ENCODE measurements at regions of chr3 and their contacts with region 1.

Region 1: DNA sequence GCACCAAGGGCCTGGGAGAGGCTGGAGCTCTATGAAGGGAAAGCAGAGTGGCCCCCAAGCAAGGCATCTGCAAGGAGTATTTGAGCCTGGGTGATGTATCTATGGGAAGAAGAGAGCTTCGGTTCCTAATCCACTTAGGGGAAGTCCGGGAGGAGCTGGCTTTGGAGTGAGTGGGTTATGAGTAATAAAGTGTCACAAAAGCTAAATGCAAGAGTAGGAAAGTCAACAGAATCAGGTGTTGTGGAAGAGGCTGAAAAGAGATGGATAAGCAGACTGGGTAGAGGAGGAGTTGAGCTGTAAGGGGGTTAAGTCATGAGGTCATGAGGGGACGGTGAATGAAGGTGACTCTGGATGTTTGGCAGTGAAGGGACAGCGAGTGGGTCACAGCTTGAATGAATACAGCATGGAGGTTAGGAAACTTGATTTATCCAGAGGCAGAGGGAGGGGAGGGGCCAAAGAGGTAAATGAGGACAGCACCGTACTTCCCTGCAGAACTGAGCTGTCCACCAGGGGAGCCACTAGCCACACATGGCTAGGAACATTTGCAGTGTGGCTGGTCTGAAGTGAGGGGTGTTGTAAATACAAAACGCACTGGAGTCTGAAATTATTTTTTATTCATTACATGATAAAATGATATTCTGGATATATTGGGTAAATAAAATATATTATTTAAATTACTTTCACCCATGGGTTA is 83.3 kb downstream of the ADCY5 start:
- DNase-seq: peak in 1 of 2 experiments; percentile 16
- H3K4me3 ChIP-seq: no peak overlapping the region
- H3K27ac ChIP-seq: no peak overlapping the region
- H3K4me1 ChIP-seq: no peaks in the 10 kb centered on the region
- H3K27me3 ChIP-seq: no peaks in the 10 kb centered on the region
- CTCF ChIP-seq: peak; percentile 46

Region 2: DNA sequence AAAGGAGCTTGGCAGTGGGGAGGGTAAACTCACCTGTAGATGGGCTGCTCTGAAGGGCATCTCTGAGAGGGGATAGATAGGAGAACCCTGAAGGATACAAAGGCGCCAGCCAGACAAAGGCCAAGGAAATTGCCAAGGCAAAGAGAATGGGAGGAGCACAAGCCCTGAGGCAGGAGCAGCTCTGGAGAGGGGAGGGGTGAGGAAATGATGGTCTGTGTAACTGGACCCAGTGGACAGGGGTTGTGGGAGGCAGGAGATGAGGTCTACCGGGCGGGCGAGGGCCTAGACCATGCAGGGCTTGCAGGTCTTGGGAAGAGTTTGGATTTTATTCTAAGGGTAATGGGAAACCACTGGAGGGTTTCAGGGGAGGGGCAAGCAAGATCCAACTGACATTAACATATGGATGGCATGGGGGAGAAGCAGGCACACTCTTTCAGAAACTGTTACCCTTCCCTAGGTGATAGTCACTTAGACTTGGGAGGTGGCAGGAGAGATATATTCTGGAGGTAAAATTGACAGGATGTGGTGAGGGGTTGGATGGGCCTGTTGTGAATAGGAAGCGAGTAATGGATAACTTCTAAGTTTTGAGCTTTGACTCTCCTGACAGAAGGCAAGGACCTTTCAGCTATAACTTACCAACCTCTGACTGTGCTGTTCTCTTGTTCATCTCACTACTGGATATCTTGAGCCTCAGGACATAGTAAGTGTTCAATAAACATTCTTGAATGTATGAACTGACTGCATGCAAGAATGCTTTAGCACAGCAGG is 300.9 kb before region 1 on chr3:
- CTCF ChIA-PET with region 1: no interaction called
- POLR2A ChIA-PET with region 1: no interaction called
- intact Hi-C with region 1: no loop called
- DNase-seq: no peak
- H3K4me3 ChIP-seq: no peak overlapping the region
- H3K27ac ChIP-seq: no peak overlapping the region
- H3K4me1 ChIP-seq: peaks cover 17% of the 10 kb centered on the region
- H3K27me3 ChIP-seq: peaks cover 14% of the 10 kb centered on the region; the same call in 1 of the 2 replicates
- CTCF ChIP-seq: no peak

Region 3: GRCh38 chr3:123169492-123169929 is 196.1 kb before region 1 on chr3:
- CTCF ChIA-PET with region 1: no interaction called
- POLR2A ChIA-PET with region 1: interaction called, 13 read pairs
- intact Hi-C with region 1: no loop called
- DNase-seq: no peak
- H3K4me3 ChIP-seq: no peak overlapping the region
- H3K27ac ChIP-seq: no peak overlapping the region
- H3K4me1 ChIP-seq: no peaks in the 10 kb centered on the region
- H3K27me3 ChIP-seq: no peaks in the 10 kb centered on the region
- CTCF ChIP-seq: no peak

Region 4: DNA sequence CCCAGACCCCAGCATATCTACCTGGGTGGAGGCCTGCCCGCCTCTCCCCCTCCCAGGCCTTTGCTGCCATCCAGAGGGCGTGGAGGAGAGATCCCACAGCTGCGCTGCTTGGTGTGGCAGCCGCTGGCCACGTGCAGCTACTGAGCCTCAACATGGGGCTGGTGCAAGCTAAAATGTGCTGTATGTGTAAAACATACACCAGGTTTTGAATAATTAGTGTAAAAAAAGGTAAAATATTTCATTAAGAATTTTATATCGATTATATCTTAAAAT is 68.0 kb before region 1 on chr3:
- CTCF ChIA-PET with region 1: no interaction called
- POLR2A ChIA-PET with region 1: no interaction called
- intact Hi-C with region 1: no loop called
- DNase-seq: no peak
- H3K4me3 ChIP-seq: no peak overlapping the region
- H3K27ac ChIP-seq: no peak overlapping the region
- H3K4me1 ChIP-seq: 0 out of 2 replicates have a peak, but pooled peaks cover 4% of the 10 kb centered on the region
- H3K27me3 ChIP-seq: no peaks in the 10 kb centered on the region
- CTCF ChIP-seq: no peak

Measured in PC-9 (cell line).